Vagina (tissue), 2 donors: ENCODE measurements at regions of chr4 and their contacts with region 1.

Region 1: GRCh38 chr4:109444182-109444844 is 10.7 kb downstream of the SEC24B start:
- DNase-seq: no peak
- H3K4me3 ChIP-seq: no peak overlapping the region
- H3K27ac ChIP-seq: no peak overlapping the region
- H3K4me1 ChIP-seq: peaks cover 57% of the 10 kb centered on the region
- H3K27me3 ChIP-seq: no peaks in the 10 kb centered on the region
- CTCF ChIP-seq: no peak
- POLR2A ChIP-seq: no peak

Region 2: GRCh38 chr4:109559983-109560686 is 115.8 kb after region 1 on chr4 and contains the start of gene MCUB:
- intact Hi-C with region 1: loop called (anchors 10 kb)
- DNase-seq: peak in 1 of 2 donors; percentile 89
- H3K4me3 ChIP-seq: peak within 1 kb of the TSS; percentile 63 to 71
- H3K27ac ChIP-seq: peak within 1 kb of the TSS; percentile 91
- H3K4me1 ChIP-seq: peaks cover 19% of the 10 kb centered on the region
- H3K27me3 ChIP-seq: no peaks in the 10 kb centered on the region
- CTCF ChIP-seq: no peak
- POLR2A ChIP-seq: peak in 1 of 2 donors; percentile 51
- total RNA-seq, gene MCUB: 28.5 TPM